Breast epithelium (tissue), 4 donors: ENCODE measurements at regions of chr17 and their contacts with region 1.

Region 1: DNA sequence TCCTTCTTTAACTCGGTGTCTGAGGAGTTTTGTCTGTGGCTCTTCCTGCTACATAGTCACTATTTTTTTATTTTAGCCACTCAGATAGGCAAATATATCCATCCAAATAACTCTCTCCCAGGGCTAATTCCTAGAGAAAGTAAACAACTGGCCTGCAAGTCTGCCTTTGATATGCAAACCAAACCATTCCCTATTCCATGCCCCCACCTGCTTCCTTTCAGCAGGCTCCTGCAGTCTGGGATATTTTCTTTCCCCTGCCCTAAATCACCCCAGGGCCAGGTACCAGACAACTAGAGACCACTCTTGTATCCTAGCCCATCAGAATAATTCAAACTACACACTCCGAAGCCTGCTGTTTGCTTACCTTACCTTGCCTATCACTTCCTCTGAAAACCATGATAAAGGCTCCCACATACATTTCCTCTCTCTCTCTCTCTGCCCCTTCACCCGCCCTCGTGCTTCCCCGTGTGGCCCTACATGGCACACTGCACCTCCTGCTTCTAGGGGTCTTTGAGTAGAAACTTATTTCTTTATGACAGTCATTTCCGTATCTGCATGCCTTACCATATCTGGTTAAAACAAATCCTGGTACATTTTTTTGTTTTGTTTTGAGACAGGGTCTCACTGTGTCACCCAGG is 8.3 kb downstream of the CD300H start:
- DNase-seq: no peak
- H3K4me3 ChIP-seq: no peak overlapping the region
- H3K27ac ChIP-seq: no peak overlapping the region
- H3K4me1 ChIP-seq: no peaks in the 10 kb centered on the region
- H3K27me3 ChIP-seq: peaks cover 0 to 5% of the 10 kb centered on the region in 2 donors
- CTCF ChIP-seq: no peak
- POLR2A ChIP-seq: no peak

Region 2: GRCh38 chr17:74059479-74060240 is 499.3 kb before region 1 on chr17:
- intact Hi-C with region 1: loop called (anchors 5 kb)
- DNase-seq: no peak
- H3K4me3 ChIP-seq: no peak overlapping the region
- H3K27ac ChIP-seq: no peak overlapping the region
- H3K4me1 ChIP-seq: no peaks in the 10 kb centered on the region
- H3K27me3 ChIP-seq: peaks cover 0 to 38% of the 10 kb centered on the region in 2 donors
- CTCF ChIP-seq: no peak
- POLR2A ChIP-seq: no peak